Sigmoid colon (tissue), 7 donors: ENCODE measurements at regions of chr4 and their contacts with region 1.

Region 1: GRCh38 chr4:99405433-99406115 is 29.6 kb downstream of the ADH7 start:
- DNase-seq: peak; percentile 87
- H3K4me3 ChIP-seq: no peak overlapping the region
- H3K27ac ChIP-seq: peak overlapping the region; percentile 62 to 76 (median 64)
- H3K4me1 ChIP-seq: peaks cover 0 to 37% (median 31%) of the 10 kb centered on the region in 4 donors
- H3K27me3 ChIP-seq: no peaks in the 10 kb centered on the region
- CTCF ChIP-seq: peak; percentile 92 to 98 (median 96)
- EP300 ChIP-seq: no peak
- POLR2A ChIP-seq: no peak

Region 2: DNA sequence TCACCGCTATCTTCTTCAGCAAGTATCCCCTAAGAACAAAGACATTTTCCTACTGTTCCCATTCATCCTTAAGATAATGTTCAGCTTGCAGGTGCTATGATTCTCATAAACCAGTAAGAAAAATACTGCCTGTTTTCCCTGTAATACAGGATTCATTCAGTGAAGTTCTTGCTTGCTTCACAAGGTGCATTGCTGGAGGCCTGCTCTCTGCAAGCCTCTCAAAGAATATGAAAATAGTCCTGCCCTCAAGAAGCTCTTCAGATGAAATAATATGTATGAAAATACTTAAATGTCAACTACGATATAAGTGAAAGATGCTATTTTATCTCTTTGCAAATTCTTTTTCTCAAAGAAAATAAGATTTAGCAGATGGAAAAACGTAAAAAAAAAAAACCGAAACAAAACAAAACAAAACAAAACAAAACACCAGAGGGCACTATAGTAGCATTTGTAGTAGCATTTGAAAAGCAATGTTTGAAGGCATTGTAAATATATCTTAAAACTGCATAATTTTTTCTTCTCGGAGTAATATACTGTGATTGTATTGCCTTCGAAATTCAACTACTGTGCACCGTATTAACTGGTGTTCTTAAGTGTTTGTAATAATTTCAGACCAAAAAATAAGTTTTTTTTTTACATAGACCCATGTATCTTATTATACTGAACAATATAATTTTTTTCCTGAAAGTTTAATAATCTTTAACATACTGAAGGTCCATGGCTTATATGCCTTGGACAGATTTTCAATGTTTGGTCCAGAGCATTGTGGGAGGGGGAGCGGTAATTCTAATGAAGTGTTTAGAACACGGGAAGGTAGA is 287.5 kb before region 1 on chr4:
- intact Hi-C with region 1: loop called (anchors 1 kb)
- DNase-seq: no peak
- H3K4me3 ChIP-seq: no peak overlapping the region
- H3K27ac ChIP-seq: no peak overlapping the region
- H3K4me1 ChIP-seq: peaks cover 0 to 6% (median 2%) of the 10 kb centered on the region in 4 donors
- H3K27me3 ChIP-seq: no peaks in the 10 kb centered on the region
- CTCF ChIP-seq: peak in 2 of 4 experiments; percentile 14 to 22
- EP300 ChIP-seq: no peak
- POLR2A ChIP-seq: no peak

Region 3: DNA sequence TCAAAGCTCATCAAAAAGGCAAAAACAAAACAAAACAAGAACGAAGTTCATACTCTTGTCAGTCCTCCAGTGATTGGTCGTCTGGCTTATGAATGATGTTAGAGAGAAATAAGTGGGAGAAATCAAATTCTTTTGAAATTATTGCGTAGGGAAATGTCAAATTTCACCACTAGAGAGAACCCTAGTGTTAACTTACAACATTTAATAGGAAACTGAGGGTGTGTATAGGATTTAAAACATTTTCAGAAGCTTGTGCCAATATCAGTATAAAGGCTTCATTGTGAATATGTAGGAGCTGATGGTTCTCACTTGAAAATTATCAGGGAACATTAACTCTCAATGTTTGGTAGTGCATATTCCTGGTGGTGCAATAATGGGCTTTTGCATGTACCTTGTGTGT is 203.9 kb before region 1 on chr4:
- intact Hi-C with region 1: loop called (anchors 2 kb)
- DNase-seq: no peak
- H3K4me3 ChIP-seq: no peak overlapping the region
- H3K27ac ChIP-seq: peak overlapping the region in 3 of 4 donors; percentile 44 to 55 (median 46)
- H3K4me1 ChIP-seq: peaks cover 0 to 9% (median 2%) of the 10 kb centered on the region in 4 donors
- H3K27me3 ChIP-seq: no peaks in the 10 kb centered on the region
- CTCF ChIP-seq: peak in 2 of 4 experiments; percentile 10 to 26
- EP300 ChIP-seq: no peak
- POLR2A ChIP-seq: no peak

Region 4: DNA sequence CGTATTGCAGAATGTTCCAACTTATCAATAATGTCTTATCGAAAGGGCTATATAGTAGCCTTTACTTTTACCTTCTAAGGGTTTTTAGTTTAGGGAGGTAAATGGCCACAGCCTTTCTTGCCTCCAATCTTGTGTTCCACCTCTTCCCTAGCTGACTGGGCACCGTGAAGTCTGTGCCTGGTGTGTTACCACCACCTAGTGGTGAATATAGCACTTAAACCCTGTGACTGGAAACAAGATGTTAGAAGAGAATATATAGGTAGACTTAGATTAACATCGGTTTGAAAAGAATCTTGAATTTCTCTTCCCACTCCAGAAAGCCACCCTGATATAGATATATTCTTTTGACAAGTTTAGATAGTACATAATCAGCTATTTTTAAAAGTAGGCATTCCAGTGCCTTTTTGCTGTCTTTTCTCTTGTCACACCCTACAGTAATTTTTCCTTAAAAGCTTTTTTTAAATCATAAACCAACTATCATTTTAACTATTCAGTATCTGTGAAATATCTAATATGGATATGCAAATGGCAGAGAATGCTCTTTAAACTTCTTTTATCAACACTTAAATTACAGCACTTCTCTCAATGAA is 57.4 kb after region 1 on chr4:
- intact Hi-C with region 1: loop called (anchors 5 kb)
- DNase-seq: peak; percentile 80
- H3K4me3 ChIP-seq: no peak overlapping the region
- H3K27ac ChIP-seq: no peak overlapping the region
- H3K4me1 ChIP-seq: no peaks in the 10 kb centered on the region
- H3K27me3 ChIP-seq: no peaks in the 10 kb centered on the region
- CTCF ChIP-seq: peak; percentile 75 to 88 (median 80)
- EP300 ChIP-seq: no peak
- POLR2A ChIP-seq: no peak